ENCODE measurements at regions of chr1 and their contacts with region 1.

Region 1: DNA sequence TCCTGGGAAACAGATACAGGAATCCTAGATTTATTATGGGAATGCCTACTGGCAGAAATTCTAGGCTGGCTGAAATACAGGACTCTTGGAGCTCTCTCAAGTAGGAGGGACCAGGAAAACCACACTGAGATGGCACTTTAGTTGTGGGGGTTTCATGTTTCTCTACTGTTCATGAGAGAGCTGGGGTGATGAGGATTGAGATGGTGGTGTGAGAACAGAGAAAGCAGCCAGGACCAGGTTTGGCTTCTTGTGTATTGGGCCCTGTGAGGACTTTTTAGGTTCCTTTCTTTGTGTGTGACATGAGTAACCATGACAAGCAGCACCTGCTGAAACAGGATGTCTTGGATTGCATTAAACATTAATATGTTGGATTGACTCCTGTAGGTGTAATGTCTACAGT is 4.9 kb downstream of the ARID1A start:
- DNase-seq: no peak
- ATAC-seq: peak; percentile 1
- H3K4me3 ChIP-seq: peak overlapping the region; percentile 98
- H3K27ac ChIP-seq: peak overlapping the region; percentile 65
- H3K4me1 ChIP-seq: peaks cover 8% of the 10 kb centered on the region
- H3K27me3 ChIP-seq: no peaks in the 10 kb centered on the region
- CTCF ChIP-seq: no peak
- EP300 ChIP-seq: no peak
- POLR2A ChIP-seq: no peak
- RAD21 ChIP-seq: no peak

Region 2: DNA sequence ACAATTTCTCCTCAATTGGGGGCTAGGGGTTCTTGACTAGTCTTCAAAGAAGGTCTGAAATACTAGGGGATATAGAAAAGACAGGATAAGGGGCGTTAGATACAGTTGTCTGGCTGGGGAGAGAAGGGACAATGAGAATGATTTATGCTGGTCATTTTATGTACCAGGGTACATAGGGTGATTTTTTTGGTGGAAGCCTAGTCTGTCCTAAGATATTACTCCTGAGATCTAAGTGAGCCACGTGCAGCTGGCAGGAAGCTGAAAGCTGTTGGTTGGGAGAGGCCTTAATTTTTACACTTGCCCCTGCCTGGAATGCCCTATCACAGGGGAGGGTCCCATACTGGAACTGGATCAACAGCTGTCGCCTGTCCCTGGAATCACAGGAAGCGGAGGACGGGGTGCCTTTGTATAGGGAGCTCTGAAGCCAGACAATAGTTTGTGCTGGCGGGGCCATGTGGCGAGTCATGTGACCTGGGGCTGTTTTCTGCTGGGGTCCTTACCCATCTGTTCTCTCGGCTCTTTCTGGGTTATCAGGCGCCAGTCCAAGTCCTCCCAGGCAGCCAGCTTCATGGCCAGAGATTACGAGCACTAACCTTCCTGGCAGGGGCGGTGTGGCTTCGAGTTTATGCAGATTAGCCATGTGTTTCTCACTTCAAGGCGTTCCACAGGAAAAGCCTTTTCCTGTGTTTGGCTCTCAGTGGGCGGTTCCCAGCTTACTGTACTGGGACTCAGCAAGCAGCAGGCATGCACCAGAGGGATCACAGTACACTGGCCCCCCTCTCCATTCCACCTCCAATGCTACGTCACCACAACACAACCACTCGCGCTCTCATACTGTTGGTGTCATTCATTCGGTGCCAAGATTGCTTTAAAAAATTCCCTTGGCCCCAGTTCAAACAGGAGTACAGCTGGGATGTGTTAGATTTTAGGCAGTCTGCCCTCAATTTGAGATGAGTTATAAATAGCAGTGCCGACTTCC is 22.6 kb after region 1 on chr1:
- CTCF ChIA-PET with region 1: interaction called, 50 read pairs
- POLR2A ChIA-PET with region 1: interaction called, 23 read pairs
- RAD21 ChIA-PET with region 1: interaction called, 15 read pairs
- SMC1A ChIA-PET with region 1: interaction called, 128 read pairs
- in situ Hi-C with region 1: no loop called
- intact Hi-C with region 1: no loop called
- DNase-seq: no peak
- ATAC-seq: peak; percentile 61
- H3K4me3 ChIP-seq: peak overlapping the region; percentile 49
- H3K27ac ChIP-seq: peak overlapping the region; percentile 72
- H3K4me1 ChIP-seq: peaks cover 53% of the 10 kb centered on the region
- H3K27me3 ChIP-seq: no peaks in the 10 kb centered on the region
- CTCF ChIP-seq: no peak
- EP300 ChIP-seq: no peak
- POLR2A ChIP-seq: 0 out of 2 replicates have a peak, but pooled peaks have one; percentile 36
- RAD21 ChIP-seq: no peak

Region 3: DNA sequence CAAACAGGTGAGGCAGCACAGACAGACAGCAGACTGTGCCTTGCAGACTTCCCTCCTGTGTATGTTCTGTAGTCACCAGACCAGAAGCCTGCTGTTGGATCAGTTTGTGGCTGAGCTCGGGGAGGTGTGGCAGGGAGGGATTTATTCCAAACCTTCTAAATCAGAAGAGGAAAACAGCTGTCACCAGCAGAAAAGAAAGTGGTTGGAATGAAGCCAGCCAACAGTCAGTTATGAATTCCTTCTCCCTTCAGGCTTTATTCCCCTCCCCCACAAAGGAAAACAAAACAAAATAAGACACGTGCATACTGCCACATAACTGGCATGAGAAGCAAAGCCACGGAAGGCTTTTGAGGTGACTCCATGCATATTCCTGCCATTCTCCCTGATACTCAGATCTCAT is 68.0 kb after region 1 on chr1:
- CTCF ChIA-PET with region 1: no interaction called
- POLR2A ChIA-PET with region 1: interaction called, 6 read pairs
- RAD21 ChIA-PET with region 1: interaction called, 3 read pairs
- SMC1A ChIA-PET with region 1: interaction called, 19 read pairs
- in situ Hi-C with region 1: no loop called
- intact Hi-C with region 1: no loop called
- DNase-seq: no peak
- ATAC-seq: no peak
- H3K4me3 ChIP-seq: no peak overlapping the region
- H3K27ac ChIP-seq: no peak overlapping the region
- H3K4me1 ChIP-seq: peaks cover 7% of the 10 kb centered on the region; the same call in 1 of the 2 replicates
- H3K27me3 ChIP-seq: no peaks in the 10 kb centered on the region
- CTCF ChIP-seq: no peak
- EP300 ChIP-seq: no peak
- POLR2A ChIP-seq: no peak
- RAD21 ChIP-seq: no peak

Measured in GM12878 (cell line).